Mammary epithelial cell (primary cell): ENCODE measurements at regions of chr4 and their contacts with region 1.

Region 1: DNA sequence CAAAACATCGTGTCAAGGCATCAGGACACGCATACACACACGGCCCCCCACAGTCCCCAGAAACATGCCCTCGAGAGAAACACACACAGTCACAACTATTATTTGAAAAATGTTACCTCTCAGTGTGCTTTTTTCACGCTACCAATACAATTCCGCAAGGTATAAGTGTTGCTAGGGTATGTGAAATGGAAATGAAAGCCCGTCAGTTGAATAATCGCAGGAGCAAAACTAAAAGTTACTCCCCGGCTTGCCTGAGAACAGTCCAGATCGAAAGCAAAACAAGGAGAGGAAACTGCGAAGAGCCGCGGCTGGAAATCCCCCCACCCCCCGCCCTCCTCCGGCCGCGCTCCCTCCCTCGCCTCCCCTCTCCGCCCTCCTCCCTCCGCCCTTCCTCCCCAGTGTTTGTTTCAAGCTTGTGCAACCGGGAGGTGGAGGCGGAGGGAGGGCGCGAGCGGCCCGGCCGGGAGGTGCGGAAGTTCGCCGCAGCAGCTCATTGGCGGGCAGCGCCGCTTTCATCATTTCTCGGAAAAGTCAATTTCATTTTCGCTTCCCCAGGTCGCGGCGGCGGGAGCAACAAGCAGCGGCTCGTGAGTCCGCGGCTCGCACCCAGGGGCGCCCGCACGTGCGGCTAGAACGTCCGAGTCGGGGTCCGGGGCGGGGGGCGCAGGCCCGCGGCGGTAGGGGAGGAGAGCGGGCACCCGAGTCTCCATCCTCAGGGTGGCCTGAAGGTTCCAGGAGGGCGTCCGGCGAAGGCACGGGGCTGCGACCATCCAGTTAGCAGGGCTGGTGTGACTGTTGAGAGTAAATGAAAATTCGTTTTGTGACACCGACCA is at the start of gene IRF2:
- DNase-seq: peak; percentile 98
- H3K4me3 ChIP-seq: peak within 1 kb of the TSS; percentile 90 to 99 (median 90)
- H3K27ac ChIP-seq: peak within 1 kb of the TSS; percentile 96
- H3K4me1 ChIP-seq: peaks cover 13% of the 10 kb centered on the region
- H3K27me3 ChIP-seq: no peaks in the 10 kb centered on the region
- CTCF ChIP-seq: no peak
- total RNA-seq, gene IRF2: 22.0 to 23.3 TPM

Region 2: GRCh38 chr4:184263910-184264732 is 210.4 kb before region 1 on chr4:
- CTCF ChIA-PET with region 1: no interaction called
- dilution Hi-C with region 1: no loop called
- in situ Hi-C with region 1: no loop called
- intact Hi-C with region 1: loop called (anchors 1 kb)
- DNase-seq: peak; percentile 79
- H3K4me3 ChIP-seq: no peak overlapping the region
- H3K27ac ChIP-seq: no peak overlapping the region
- H3K4me1 ChIP-seq: peaks cover 26% of the 10 kb centered on the region
- H3K27me3 ChIP-seq: peaks cover under 1% of the 10 kb centered on the region
- CTCF ChIP-seq: peak; percentile 79 to 80

Region 3: DNA sequence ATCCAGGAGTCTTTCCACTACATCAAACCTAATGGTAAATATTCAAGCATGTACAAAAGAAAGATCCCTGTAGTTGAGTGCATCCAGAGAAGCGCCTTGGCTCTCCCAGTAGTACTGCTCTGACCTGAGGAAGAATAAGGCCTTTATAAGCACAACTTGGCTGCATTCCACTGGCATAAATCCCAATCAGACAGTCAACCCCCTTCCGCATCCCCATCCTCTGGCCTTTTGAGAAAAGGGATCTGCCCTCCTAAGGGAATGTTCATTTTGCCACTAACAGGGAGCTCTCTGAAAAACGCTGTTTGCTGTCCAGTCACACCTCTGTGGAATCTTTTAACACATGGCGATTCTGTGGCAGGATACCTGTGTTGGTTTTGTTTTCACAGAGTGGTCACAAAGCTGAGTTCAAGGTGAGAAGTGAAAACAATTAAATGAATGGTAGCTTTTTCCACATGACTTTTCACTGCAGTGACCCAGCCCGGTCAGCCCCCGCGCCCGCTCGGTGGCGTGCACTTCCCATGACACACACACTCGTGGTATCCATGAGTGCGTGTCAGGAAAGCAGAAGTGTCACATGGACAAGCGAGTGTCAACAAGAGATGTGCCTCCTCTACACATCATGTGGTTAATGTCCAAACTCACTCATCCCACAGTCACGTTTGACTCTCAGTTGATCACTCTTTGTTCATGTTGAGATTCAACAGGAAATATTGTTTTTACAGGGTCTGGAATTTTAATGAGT is 144.6 kb before region 1 on chr4:
- CTCF ChIA-PET with region 1: no interaction called
- dilution Hi-C with region 1: no loop called
- in situ Hi-C with region 1: no loop called
- intact Hi-C with region 1: loop called (anchors 2 kb)
- DNase-seq: peak; percentile 85
- H3K4me3 ChIP-seq: no peak overlapping the region
- H3K27ac ChIP-seq: peak overlapping the region; percentile 83
- H3K4me1 ChIP-seq: peaks cover 37% of the 10 kb centered on the region
- H3K27me3 ChIP-seq: no peaks in the 10 kb centered on the region
- CTCF ChIP-seq: no peak

Region 4: DNA sequence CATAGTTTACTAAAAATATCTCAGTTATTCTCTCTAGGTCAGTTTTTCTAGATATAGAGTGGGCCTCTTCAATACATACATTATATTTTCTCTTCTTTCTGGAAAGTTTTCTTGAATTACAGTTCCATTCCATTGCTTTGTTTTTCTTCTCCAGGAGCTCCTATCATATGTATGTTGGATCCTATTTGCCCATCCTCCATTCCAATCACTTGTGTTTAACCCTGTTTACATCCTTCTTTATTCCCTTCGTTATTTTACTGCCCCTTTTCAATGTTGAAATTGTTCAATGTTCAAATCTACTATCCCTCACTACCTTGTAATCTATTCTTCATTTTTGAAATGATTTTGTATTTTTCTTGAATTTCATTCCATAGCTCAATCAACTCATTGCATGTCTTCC is 97.6 kb before region 1 on chr4:
- CTCF ChIA-PET with region 1: no interaction called
- dilution Hi-C with region 1: no loop called
- in situ Hi-C with region 1: no loop called
- intact Hi-C with region 1: no loop called
- DNase-seq: no peak
- H3K4me3 ChIP-seq: no peak overlapping the region
- H3K27ac ChIP-seq: no peak overlapping the region
- H3K4me1 ChIP-seq: no peaks in the 10 kb centered on the region
- H3K27me3 ChIP-seq: no peaks in the 10 kb centered on the region
- CTCF ChIP-seq: no peak

Region 5: GRCh38 chr4:184400375-184400870 is 74.1 kb before region 1 on chr4:
- CTCF ChIA-PET with region 1: no interaction called
- dilution Hi-C with region 1: no loop called
- in situ Hi-C with region 1: no loop called
- intact Hi-C with region 1: loop called (anchors 1 kb)
- DNase-seq: peak; percentile 92
- H3K4me3 ChIP-seq: no peak overlapping the region
- H3K27ac ChIP-seq: peak overlapping the region; percentile 89
- H3K4me1 ChIP-seq: peaks cover 29% of the 10 kb centered on the region
- H3K27me3 ChIP-seq: no peaks in the 10 kb centered on the region
- CTCF ChIP-seq: peak; percentile 28 to 41

Region 6: DNA sequence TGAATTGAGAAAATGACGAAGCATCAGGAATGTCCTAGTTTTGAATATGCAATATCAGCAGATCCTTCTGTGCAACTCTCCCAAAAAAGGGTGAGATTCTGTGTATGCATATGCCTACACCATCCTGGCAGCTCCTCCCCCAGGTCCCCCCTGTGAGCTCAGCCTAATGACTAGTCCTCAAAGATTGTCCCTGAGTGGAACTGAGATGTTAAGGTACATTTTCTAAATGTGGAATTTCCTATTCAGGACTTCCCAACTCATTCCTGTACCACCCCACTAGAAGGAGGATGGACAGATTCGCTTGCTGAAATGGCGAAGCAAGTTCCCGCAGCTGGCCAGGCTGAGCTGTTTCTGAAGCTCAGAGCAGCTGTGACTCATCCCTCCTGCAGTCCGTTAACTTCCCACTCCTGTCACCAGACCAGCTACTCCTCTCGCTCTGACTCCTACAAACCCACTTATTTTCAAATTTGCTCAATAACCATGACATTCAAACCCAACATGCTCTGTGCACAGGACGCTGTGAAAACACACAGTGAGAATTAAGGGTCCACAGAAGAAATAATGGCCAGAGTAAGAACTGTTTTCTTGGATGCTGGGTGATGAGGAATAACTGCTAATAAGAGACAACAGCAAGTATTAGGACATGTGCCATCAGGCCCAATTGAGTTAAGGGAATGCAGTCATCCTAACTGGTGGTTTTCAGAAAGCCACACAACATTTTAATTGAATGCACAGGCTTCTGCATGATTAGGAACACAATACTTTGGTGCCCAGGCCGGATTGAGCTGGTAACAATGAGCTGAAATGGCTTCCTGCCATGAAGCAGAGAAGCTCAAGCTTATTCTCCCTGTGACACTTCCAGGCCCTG is 39.9 kb after region 1 on chr4:
- CTCF ChIA-PET with region 1: no interaction called
- dilution Hi-C with region 1: no loop called
- in situ Hi-C with region 1: no loop called
- intact Hi-C with region 1: loop called (anchors 2 kb)
- DNase-seq: peak; percentile 84
- H3K4me3 ChIP-seq: peak overlapping the region; percentile 4 to 27 (median 13)
- H3K27ac ChIP-seq: peak overlapping the region; percentile 35
- H3K4me1 ChIP-seq: peaks cover 26% of the 10 kb centered on the region
- H3K27me3 ChIP-seq: no peaks in the 10 kb centered on the region
- CTCF ChIP-seq: no peak

Region 7: GRCh38 chr4:185096032-185096653 is 621.7 kb after region 1 on chr4:
- CTCF ChIA-PET with region 1: interaction called, 21 read pairs
- dilution Hi-C with region 1: no loop called
- in situ Hi-C with region 1: no loop called
- intact Hi-C with region 1: no loop called
- DNase-seq: peak; percentile 16
- H3K4me3 ChIP-seq: no peak overlapping the region
- H3K27ac ChIP-seq: no peak overlapping the region
- H3K4me1 ChIP-seq: no peaks in the 10 kb centered on the region
- H3K27me3 ChIP-seq: no peaks in the 10 kb centered on the region
- CTCF ChIP-seq: peak; percentile 41 to 62